ENCODE measurements at regions of chr4 and their contacts with region 1.

Region 1: DNA sequence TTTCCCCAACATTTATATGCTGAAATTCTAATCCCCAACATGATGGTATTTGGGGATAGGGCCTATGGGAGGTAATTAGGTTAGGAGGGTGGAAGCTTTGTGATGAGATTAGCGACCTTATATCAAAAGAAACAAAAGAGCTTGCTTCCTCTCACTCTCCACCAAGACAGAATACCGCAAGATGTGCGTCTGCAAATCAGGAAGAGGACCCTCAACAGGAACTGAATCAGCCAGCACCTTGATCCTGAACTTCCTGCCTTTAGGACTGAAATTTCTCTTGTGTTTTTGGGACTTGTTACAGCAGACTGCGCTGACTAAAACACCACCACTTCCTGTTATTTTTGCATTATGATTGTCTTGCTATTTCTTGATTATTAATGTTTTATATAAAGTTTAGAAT is 1889.4 kb downstream of the C4orf33 start:
- DNase-seq: peak; percentile 74
- H3K4me3 ChIP-seq: no peak overlapping the region
- H3K27ac ChIP-seq: peak overlapping the region; percentile 50
- H3K4me1 ChIP-seq: peaks cover 11% of the 10 kb centered on the region
- H3K27me3 ChIP-seq: no peaks in the 10 kb centered on the region
- CTCF ChIP-seq: no peak
- POLR2A ChIP-seq: no peak

Region 2: GRCh38 chr4:129344058-129344457 is 1641.3 kb before region 1 on chr4:
- CTCF ChIA-PET with region 1: no interaction called
- POLR2A ChIA-PET with region 1: no interaction called
- dilution Hi-C with region 1: no loop called
- intact Hi-C with region 1: loop called (anchors 5 kb)
- DNase-seq: peak; percentile 50
- H3K4me3 ChIP-seq: no peak overlapping the region
- H3K27ac ChIP-seq: no peak overlapping the region
- H3K4me1 ChIP-seq: no peaks in the 10 kb centered on the region
- H3K27me3 ChIP-seq: no peaks in the 10 kb centered on the region
- CTCF ChIP-seq: peak; percentile 56 to 60
- POLR2A ChIP-seq: no peak

Measured in endothelial cell of umbilical vein (primary cell).